Natural killer cell (primary cell): ENCODE measurements at regions of chr1 and their contacts with region 1.

Region 1: DNA sequence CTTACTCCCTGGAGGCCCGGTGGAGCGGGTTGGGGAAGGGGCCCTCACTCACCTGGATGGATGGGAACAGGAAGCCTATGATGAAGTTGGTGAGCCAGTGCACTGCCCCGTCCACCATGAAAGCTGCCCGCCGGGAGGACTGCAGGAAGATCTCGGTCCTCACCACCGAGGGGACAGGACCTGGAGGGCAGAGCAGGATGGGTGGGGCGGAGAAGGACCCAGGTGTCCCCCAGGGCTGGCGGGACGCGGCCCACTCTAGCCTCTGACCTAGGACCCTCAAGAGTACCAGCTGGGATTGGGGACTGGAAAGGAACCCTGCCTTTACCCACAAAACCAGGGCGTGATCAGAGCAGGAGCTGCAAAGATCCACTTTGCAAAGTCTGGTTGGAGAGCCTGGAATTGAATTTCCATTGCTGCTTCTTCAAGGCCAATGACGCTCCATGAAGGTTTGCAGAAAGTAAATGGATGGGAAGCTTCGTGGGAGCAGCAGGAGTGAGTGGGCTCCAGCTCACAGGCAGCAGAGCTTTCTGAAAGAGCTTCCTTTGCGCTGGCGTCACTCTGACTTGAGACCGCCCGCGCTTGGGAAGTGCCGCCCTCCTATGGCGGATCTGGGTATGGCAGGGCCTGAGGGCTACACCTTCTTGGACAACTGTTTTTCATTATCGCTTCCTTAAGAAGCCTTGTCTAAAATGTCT is 21.4 kb downstream of the SLC2A7 start:
- DNase-seq: peak; percentile 63 to 87
- ATAC-seq: peak; percentile 88 to 96 (median 92)
- H3K4me3 ChIP-seq: no peak overlapping the region
- H3K4me3 Mint-ChIP-seq: no peak overlapping the region
- H3K27ac ChIP-seq: no peak overlapping the region
- H3K27ac Mint-ChIP-seq: no peak overlapping the region
- H3K4me1 ChIP-seq: peaks cover 17% of the 10 kb centered on the region
- H3K4me1 Mint-ChIP-seq: no peaks in the 10 kb centered on the region
- H3K27me3 ChIP-seq: no peaks in the 10 kb centered on the region
- H3K27me3 Mint-ChIP-seq: no peaks in the 10 kb centered on the region
- CTCF ChIP-seq: peak; percentile 82

Region 2: DNA sequence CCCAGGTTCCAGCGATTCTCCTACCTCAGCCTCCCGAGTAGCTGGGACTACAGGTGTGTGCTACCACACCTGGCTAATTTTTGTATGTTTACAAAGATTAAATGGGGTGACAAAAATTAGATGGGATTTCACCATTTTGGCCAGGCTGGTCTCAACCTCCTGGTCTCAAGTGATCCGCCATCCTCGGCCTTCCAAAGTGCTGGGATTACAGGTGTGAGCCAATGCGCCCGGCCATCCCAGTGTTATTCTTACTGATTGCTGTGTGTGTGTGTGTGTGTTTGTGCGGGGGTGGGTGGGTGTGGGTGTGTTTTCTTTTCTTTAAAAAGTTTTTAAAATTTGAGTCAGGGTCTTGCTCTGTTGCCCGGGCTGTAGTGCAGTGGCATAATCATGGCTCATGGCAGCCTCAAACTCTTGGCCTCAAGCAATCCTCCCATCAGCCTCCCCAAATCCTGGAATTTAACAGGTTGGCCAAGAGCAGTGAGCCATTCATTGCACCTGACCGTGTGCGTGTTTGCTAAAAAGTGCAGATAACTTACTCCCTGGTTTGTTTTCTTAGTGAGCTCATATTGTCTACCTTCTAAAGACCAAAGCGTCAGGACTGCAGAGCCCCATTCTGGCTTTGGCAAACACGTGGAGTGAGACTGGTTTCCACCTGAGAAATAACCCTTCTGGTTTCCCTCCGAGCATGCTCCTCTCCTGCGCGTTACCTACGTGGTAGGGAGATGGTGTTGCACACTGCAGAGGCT is 91.6 kb before region 1 on chr1:
- intact Hi-C with region 1: loop called (anchors 5 kb)
- DNase-seq: no peak
- ATAC-seq: no peak
- H3K4me3 ChIP-seq: no peak overlapping the region
- H3K4me3 Mint-ChIP-seq: no peak overlapping the region
- H3K27ac ChIP-seq: no peak overlapping the region
- H3K27ac Mint-ChIP-seq: no peak overlapping the region
- H3K4me1 ChIP-seq: no peaks in the 10 kb centered on the region
- H3K4me1 Mint-ChIP-seq: no peaks in the 10 kb centered on the region
- H3K27me3 ChIP-seq: no peaks in the 10 kb centered on the region
- H3K27me3 Mint-ChIP-seq: no peaks in the 10 kb centered on the region
- CTCF ChIP-seq: no peak

Region 3: GRCh38 chr1:9234223-9235095 is 229.6 kb after region 1 on chr1 and contains the start of gene H6PD:
- intact Hi-C with region 1: no loop called
- DNase-seq: peak; percentile 69 to 88
- ATAC-seq: peak; percentile 82 to 93 (median 83)
- H3K4me3 ChIP-seq: peak within 1 kb of the TSS; percentile 74
- H3K4me3 Mint-ChIP-seq: peak within 1 kb of the TSS; percentile 97
- H3K27ac ChIP-seq: peak within 1 kb of the TSS; percentile 83
- H3K27ac Mint-ChIP-seq: peak within 1 kb of the TSS; percentile 90 to 93
- H3K4me1 ChIP-seq: peaks cover 35% of the 10 kb centered on the region
- H3K4me1 Mint-ChIP-seq: peaks cover 26% of the 10 kb centered on the region in 2 donors
- H3K27me3 ChIP-seq: no peaks in the 10 kb centered on the region
- H3K27me3 Mint-ChIP-seq: no peaks in the 10 kb centered on the region
- CTCF ChIP-seq: peak; percentile 31
- total RNA-seq, gene H6PD: 24.3 to 37.1 (median 31.2) TPM

Region 4: DNA sequence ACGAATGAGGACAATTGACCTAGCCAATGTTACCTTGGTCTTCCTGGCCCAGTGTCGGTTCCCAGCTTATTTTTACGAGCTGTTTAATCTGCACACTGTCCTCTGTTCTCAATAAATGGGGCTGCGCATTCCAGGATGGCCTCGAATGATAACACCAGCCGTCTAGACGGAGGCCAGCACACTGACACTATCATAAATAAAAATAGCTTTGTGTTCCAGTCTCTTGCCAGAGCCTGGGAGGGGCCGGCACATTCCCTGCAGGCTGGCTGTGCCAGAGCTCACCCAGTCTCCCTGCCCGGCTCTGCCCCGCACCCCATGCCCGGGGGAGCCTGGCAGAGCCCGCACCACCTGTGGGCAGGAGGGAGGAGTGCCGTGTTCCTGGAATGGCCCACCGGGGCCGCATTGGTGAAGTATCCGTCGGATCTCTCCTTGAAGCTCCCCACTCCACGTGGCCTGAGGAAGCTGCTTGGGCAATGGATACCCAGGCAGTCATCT is 380.0 kb after region 1 on chr1:
- intact Hi-C with region 1: no loop called
- DNase-seq: no peak
- ATAC-seq: no peak
- H3K4me3 ChIP-seq: no peak overlapping the region
- H3K4me3 Mint-ChIP-seq: no peak overlapping the region
- H3K27ac ChIP-seq: no peak overlapping the region
- H3K27ac Mint-ChIP-seq: no peak overlapping the region
- H3K4me1 ChIP-seq: no peaks in the 10 kb centered on the region
- H3K4me1 Mint-ChIP-seq: no peaks in the 10 kb centered on the region
- H3K27me3 ChIP-seq: no peaks in the 10 kb centered on the region
- H3K27me3 Mint-ChIP-seq: peaks cover 7 to 15% of the 10 kb centered on the region in 2 donors
- CTCF ChIP-seq: no peak